PC-3 (cell line): ENCODE measurements at regions of chr7 and their contacts with region 1.

Region 1: DNA sequence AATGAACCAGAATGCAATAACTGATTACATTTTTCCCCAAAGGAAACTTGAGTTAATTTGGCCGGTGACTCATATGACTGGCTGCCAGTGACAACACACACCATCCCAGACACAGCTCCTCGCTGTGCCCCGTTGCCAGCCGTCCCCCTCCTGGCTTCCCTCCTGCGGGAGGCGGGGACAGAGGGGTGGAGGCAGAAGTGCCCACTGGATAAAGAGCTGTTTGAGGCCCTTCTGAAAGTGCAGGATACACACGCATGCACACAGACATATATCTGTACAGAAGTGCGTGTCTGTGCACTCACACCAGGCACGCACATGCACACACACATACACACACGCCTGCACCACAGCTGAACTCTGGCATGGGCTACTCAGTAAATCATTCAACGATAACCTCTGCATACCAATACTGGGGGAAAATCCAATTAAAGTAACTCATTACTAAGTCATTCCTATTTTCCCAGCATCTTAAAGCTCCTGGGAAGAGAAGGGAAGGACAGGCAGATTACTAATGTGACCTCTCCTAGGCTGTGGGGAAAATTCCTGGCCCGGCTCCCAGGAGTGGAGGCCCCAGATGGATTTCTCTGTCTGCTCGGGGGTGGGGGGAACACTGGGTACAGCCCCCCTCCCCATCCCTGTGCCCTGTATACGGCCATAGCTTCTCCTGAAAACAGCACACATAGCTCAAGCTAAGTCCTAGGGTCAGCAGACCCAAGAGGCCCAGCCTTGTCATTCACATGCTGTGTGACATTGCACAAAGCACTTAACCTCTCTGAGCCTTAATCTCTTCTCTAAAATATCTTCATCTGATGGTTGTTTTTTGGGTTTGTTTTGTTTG is 52.3 kb upstream of the MYL10 start:
- DNase-seq: peak; percentile 86
- ATAC-seq: peak; percentile 99
- H3K4me3 ChIP-seq: peak overlapping the region; percentile 45
- H3K27ac ChIP-seq: peak overlapping the region; percentile 75
- H3K4me1 ChIP-seq: peaks cover 21% of the 10 kb centered on the region
- H3K27me3 ChIP-seq: no peaks in the 10 kb centered on the region
- CTCF ChIP-seq: no peak

Region 2: GRCh38 chr7:101602484-101603241 is 78.7 kb before region 1 on chr7:
- CTCF ChIA-PET with region 1: interaction called, 12 read pairs
- POLR2A ChIA-PET with region 1: no interaction called
- intact Hi-C with region 1: loop called (anchors 1 kb)
- DNase-seq: peak; percentile 82
- ATAC-seq: peak; percentile 99
- H3K4me3 ChIP-seq: no peak overlapping the region
- H3K27ac ChIP-seq: no peak overlapping the region
- H3K4me1 ChIP-seq: no peaks in the 10 kb centered on the region
- H3K27me3 ChIP-seq: no peaks in the 10 kb centered on the region
- CTCF ChIP-seq: peak; percentile 90

Region 3: DNA sequence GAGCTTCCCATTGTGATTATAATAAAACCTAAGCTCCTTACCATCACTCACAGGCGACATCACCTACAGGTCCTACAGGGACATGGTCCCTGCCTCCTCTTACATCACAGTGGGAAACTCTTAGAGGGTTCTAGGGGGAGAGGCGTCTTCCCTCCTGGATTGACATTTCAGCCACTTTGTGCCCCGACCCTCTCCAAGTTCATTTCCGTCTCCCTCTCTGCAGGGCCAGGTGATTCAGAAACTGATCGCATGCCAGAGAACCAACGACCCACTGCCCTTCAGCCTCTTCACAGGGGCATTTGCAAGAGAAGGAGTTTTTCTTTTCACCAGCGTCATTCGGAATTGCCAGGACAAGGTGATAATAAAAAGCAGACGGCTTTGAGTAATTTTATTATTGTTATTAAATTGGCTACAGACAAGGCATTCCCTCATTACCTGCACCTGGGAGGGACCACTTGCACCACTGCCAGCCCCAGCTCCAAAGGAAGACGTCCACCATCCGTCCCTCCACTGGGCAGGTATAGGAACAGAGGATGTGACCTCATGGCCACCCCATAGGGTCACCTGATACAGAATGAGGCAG is 50.2 kb after region 1 on chr7:
- CTCF ChIA-PET with region 1: no interaction called
- POLR2A ChIA-PET with region 1: interaction called, 12 read pairs
- intact Hi-C with region 1: no loop called
- DNase-seq: no peak
- ATAC-seq: no peak
- H3K4me3 ChIP-seq: no peak overlapping the region
- H3K27ac ChIP-seq: no peak overlapping the region
- H3K4me1 ChIP-seq: peaks cover 4% of the 10 kb centered on the region; the same call in 1 of the 2 replicates
- H3K27me3 ChIP-seq: no peaks in the 10 kb centered on the region
- CTCF ChIP-seq: no peak

Region 4: DNA sequence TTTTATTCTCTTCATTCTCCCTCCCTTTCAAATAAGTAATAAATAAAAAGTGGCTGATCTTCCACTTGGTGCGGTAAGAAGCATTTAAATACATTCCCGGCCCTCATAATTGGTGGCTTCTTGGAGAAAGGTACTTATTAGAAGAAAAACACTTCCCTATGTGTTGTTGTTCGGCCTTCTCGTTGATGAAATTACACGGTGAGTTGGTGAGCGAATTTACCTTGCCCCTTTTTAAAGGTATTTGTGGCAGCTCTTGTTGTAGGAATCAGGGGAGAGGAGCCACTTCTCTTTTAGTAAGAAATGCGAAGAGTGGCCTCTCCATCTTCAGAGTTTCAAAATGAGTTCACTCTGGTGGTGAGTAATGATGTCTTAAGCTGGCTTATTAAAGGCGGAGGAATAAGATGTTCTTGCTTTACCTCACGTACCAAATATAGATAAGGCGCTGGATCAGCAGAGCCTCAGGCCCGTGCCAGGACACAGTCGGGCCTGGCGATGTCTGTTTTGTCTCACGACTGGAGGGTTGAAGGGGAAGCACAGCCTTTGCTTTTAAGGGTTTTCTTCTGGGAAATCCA is 271.9 kb after region 1 on chr7:
- CTCF ChIA-PET with region 1: no interaction called
- POLR2A ChIA-PET with region 1: no interaction called
- intact Hi-C with region 1: no loop called
- DNase-seq: peak; percentile 61
- ATAC-seq: peak; percentile 62
- H3K4me3 ChIP-seq: peak overlapping the region; percentile 33; the same call in 1 of the 2 replicates
- H3K27ac ChIP-seq: peak overlapping the region; percentile 92
- H3K4me1 ChIP-seq: peaks cover 28% of the 10 kb centered on the region
- H3K27me3 ChIP-seq: no peaks in the 10 kb centered on the region
- CTCF ChIP-seq: no peak